ENCODE measurements at regions of chrX and their contacts with region 1.

Region 1: GRCh38 chrX:16946361-16946964 is at the start of gene REPS2:
- DNase-seq: peak; percentile 51 to 90 (median 76)
- ATAC-seq: peak; percentile 97
- H3K4me3 ChIP-seq: peak within 1 kb of the TSS; percentile 59
- H3K4me3 Mint-ChIP-seq: peak within 1 kb of the TSS; percentile 89
- H3K27ac ChIP-seq: no peak within 1 kb of the TSS
- H3K27ac Mint-ChIP-seq: peak within 1 kb of the TSS; percentile 70
- H3K4me1 ChIP-seq: peaks cover 12% of the 10 kb centered on the region
- H3K4me1 Mint-ChIP-seq: no peaks in the 10 kb centered on the region
- H3K27me3 ChIP-seq: no peaks in the 10 kb centered on the region
- H3K27me3 Mint-ChIP-seq: no peaks in the 10 kb centered on the region
- CTCF ChIP-seq: no peak
- total RNA-seq, gene REPS2: 0.53 to 0.60 TPM

Region 2: GRCh38 chrX:16528620-16529019 is 417.8 kb before region 1 on chrX:
- CTCF ChIA-PET with region 1: no interaction called
- POLR2A ChIA-PET with region 1: no interaction called
- intact Hi-C with region 1: no loop called
- DNase-seq: peak in 12 of 14 experiments; percentile 2 to 75 (median 21)
- ATAC-seq: peak; percentile 92
- H3K4me3 ChIP-seq: no peak overlapping the region
- H3K4me3 Mint-ChIP-seq: peak overlapping the region; percentile 65
- H3K27ac ChIP-seq: peak overlapping the region in 1 of 2 donors; percentile 55
- H3K27ac Mint-ChIP-seq: peak overlapping the region; percentile 93
- H3K4me1 ChIP-seq: peaks cover 30% of the 10 kb centered on the region
- H3K4me1 Mint-ChIP-seq: peaks cover 36% of the 10 kb centered on the region
- H3K27me3 ChIP-seq: no peaks in the 10 kb centered on the region
- H3K27me3 Mint-ChIP-seq: no peaks in the 10 kb centered on the region
- CTCF ChIP-seq: no peak

Region 3: DNA sequence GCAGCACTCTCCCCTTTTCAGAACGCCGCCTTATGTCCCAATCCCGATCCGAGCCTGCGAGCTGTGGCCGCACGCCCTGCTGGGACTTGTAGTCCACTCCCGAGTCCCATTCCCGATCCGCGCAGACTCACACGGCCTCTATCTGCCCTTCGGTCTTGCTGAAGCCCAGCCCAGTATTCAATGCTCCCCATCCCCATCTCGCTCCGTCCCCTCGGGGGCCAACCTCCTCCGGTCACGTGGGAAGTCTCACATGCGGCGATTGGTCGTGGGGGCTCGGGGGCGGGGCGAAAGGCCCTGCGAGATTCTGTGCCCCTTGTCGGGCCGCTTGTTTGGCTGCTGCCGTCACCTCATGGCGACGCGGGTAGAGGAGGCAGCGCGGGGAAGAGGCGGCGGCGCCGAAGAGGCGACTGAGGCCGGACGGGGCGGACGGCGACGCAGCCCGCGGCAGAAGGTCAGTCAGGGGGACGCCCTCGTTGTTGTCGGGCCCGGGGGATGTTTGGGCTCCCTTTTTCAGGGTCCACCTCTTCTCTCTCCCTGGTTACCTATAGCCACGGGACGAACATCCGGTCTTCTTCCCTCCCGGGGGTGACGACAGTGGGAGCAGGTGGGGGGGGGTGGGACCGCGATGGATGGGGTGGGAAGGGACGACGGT is 160.2 kb before region 1 on chrX and contains the start of gene TXLNG:
- CTCF ChIA-PET with region 1: no interaction called
- POLR2A ChIA-PET with region 1: no interaction called
- intact Hi-C with region 1: loop called in 1 of 2 experiments (anchors 10 kb)
- DNase-seq: peak; percentile 85 to 98 (median 94)
- ATAC-seq: peak; percentile 94
- H3K4me3 ChIP-seq: peak within 1 kb of the TSS; percentile 76
- H3K4me3 Mint-ChIP-seq: peak within 1 kb of the TSS; percentile 97
- H3K27ac ChIP-seq: peak within 1 kb of the TSS; percentile 84 to 87
- H3K27ac Mint-ChIP-seq: peak within 1 kb of the TSS; percentile 84
- H3K4me1 ChIP-seq: peaks cover 12% of the 10 kb centered on the region
- H3K4me1 Mint-ChIP-seq: peaks cover 29% of the 10 kb centered on the region
- H3K27me3 ChIP-seq: no peaks in the 10 kb centered on the region
- H3K27me3 Mint-ChIP-seq: no peaks in the 10 kb centered on the region
- CTCF ChIP-seq: no peak
- total RNA-seq, gene TXLNG: 17.2 to 17.5 TPM

Region 4: GRCh38 chrX:16882702-16883486 is 63.6 kb before region 1 on chrX:
- CTCF ChIA-PET with region 1: interaction called, 4 read pairs
- POLR2A ChIA-PET with region 1: interaction called, 7 read pairs
- intact Hi-C with region 1: loop called in 1 of 2 experiments (anchors 5 kb)
- DNase-seq: peak; percentile 38 to 79 (median 62)
- ATAC-seq: peak; percentile 84
- H3K4me3 ChIP-seq: peak overlapping the region; percentile 63
- H3K4me3 Mint-ChIP-seq: peak overlapping the region; percentile 87
- H3K27ac ChIP-seq: peak overlapping the region in 1 of 2 donors; percentile 50
- H3K27ac Mint-ChIP-seq: peak overlapping the region; percentile 81
- H3K4me1 ChIP-seq: peaks cover 12% of the 10 kb centered on the region
- H3K4me1 Mint-ChIP-seq: peaks cover 4% of the 10 kb centered on the region
- H3K27me3 ChIP-seq: peaks cover 0 to 4% of the 10 kb centered on the region in 2 experiments
- H3K27me3 Mint-ChIP-seq: no peaks in the 10 kb centered on the region
- CTCF ChIP-seq: peak; percentile 70